ENCODE measurements at regions of chr10 and their contacts with region 1.

Region 1: GRCh38 chr10:24518981-24519597 is 204.6 kb downstream of the ARHGAP21 start:
- DNase-seq: no peak
- H3K4me3 ChIP-seq: no peak overlapping the region
- H3K27ac ChIP-seq: peak overlapping the region in 1 of 4 donors; percentile 9
- H3K4me1 ChIP-seq: peaks cover 0 to 9% (median 7%) of the 10 kb centered on the region in 3 donors
- H3K27me3 ChIP-seq: no peaks in the 10 kb centered on the region
- CTCF ChIP-seq: peak; percentile 45 to 71 (median 62)
- POLR2A ChIP-seq: no peak

Region 2: DNA sequence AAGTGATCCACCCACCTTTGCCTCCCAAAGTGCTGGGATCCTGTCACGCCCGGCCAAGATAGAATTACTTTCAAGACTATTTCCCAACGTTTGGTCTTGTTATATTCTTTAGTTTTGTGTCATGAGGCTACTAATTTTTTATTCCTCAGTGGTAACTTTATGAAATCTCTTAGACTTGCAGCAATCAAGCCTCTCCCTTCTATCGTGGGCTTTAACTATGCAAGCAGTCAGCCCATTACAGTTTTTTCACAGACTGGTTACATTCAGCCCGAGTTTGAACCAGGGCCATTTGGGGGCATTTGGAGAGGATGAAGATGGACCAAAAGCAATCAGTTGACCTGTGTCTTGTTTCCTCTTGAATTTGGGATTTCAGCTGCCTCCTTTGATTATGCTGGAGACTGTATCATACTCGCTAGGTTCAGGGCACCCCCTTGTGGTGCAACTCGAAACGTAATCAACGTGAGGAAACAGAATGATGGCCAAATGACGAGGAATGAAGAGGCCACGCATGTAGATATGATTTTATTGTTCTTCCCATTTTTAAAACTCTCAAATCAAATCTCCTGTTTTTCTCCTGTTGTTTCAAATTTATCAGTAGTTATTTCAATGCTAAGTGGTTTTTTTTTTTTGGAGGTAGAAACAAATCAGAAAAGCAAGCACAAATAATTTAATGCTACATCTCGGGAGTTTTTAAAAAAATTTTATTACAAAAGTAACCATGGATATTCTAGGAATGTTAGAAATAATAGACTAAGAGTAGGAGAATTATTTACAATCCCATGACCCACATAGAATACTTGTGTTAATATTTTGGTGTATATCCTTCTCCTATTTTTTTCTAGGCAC is 158.6 kb before region 1 on chr10:
- intact Hi-C with region 1: loop called (anchors 10 kb)
- DNase-seq: no peak
- H3K4me3 ChIP-seq: no peak overlapping the region
- H3K27ac ChIP-seq: no peak overlapping the region
- H3K4me1 ChIP-seq: peaks cover 3 to 30% (median 8%) of the 10 kb centered on the region in 3 donors
- H3K27me3 ChIP-seq: no peaks in the 10 kb centered on the region
- CTCF ChIP-seq: peak in 5 of 6 experiments; percentile 55 to 79 (median 64)
- POLR2A ChIP-seq: no peak

Measured in esophagus squamous epithelium (tissue), 5 donors.